ENCODE measurements at regions of chr6 and their contacts with region 1.

Region 1: GRCh38 chr6:44265007-44265721 is at the start of gene NFKBIE:
- DNase-seq: peak; percentile 94
- H3K4me3 Mint-ChIP-seq: peak within 1 kb of the TSS; percentile 85
- H3K27ac Mint-ChIP-seq: peak within 1 kb of the TSS; percentile 93
- H3K4me1 Mint-ChIP-seq: peaks cover 62% of the 10 kb centered on the region
- H3K27me3 Mint-ChIP-seq: peaks cover 33% of the 10 kb centered on the region

Region 2: DNA sequence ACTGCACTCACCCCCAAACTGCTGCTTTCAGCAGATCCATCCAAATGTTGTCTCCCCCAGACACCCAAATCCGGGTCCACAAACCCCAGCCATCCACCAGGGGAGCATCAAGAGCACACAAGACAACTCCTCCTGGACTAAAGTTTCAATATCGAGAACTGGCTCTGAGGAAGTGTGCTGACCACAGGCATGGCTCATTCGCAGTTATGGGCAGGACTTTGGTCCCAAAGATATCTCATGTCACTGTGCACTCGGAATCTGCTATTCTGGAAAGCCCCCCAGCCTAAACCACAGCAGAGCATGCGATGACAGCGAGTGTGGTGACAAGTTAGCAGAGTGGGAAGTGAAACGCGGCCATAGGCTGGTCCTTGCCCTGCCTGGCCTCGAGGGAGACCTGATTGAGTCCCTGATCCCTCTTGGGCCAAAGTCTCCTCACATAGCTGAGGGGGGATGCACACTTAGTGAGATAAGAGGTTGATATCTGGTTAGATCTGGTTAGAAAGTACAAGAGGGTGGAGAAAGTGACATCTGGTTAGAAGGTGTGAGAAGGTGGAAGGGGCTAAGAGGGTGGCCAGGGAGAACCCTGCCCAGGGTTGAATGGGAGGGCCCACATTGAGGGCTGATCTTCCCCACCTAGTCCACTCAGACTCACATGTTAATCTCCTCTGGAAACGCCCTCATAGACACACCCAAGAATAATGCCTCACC is 287.6 kb before region 1 on chr6:
- CTCF ChIA-PET with region 1: no interaction called
- DNase-seq: peak; percentile 16
- H3K4me3 Mint-ChIP-seq: no peak overlapping the region
- H3K27ac Mint-ChIP-seq: no peak overlapping the region
- H3K4me1 Mint-ChIP-seq: no peaks in the 10 kb centered on the region
- H3K27me3 Mint-ChIP-seq: peaks cover 52% of the 10 kb centered on the region

Region 3: GRCh38 chr6:44276667-44277640 is 11.8 kb after region 1 on chr6:
- CTCF ChIA-PET with region 1: interaction called, 10 read pairs
- DNase-seq: no peak
- H3K4me3 Mint-ChIP-seq: no peak overlapping the region
- H3K27ac Mint-ChIP-seq: no peak overlapping the region
- H3K4me1 Mint-ChIP-seq: peaks cover 5% of the 10 kb centered on the region
- H3K27me3 Mint-ChIP-seq: peaks cover 88% of the 10 kb centered on the region

Region 4: DNA sequence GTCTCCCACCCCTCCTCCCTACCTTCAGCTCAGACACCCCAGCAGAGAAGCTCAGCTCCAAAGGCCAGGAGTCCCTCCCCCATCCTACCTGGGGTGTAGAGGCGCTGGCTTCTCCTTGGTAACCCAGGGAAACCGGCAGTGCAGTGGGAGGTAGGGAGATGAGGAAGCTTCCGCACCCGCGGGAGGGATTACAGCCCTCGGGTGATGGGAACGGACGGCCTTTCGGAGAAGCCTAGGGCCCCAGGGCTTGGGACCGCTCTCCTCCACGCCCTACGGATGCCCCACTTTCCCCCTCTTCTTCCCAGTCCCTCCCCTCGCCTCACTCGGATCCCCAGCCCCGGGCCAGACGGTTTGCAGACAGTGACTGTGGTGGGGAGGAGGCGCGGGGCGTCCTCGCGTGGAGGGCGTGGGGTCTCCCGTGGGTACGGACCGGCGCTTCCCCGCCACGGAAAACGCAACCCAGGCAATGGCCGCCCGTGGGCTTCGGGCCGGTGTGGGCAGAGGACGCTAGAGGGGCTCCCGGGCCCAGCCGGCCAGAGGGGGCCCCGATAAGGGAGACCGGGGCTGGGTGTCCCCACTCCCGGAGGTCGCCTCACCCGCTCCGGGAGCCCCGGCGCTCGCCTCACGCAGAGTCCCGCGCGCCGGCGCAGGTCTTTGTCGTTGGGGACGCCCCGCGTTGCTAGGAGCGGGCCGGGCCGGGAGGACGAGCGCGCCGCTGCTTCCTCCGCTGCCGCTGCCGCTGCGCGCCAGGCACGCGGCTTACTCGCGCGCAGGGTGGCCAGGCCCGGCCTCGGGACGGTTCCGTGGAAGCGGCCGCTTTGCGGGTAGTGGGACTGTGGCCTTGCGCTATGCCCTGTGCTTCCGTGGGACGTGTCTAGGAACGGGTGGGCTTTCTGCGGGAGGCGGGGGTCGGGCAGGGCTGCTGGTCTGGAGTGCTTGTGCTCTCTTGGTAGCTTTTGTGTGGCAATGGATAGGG is 32.2 kb after region 1 on chr6:
- CTCF ChIA-PET with region 1: interaction called, 83 read pairs
- DNase-seq: peak; percentile 68
- H3K4me3 Mint-ChIP-seq: peak overlapping the region; percentile 18
- H3K27ac Mint-ChIP-seq: peak overlapping the region; percentile 12
- H3K4me1 Mint-ChIP-seq: peaks cover 6% of the 10 kb centered on the region
- H3K27me3 Mint-ChIP-seq: peaks cover 64% of the 10 kb centered on the region

Region 5: DNA sequence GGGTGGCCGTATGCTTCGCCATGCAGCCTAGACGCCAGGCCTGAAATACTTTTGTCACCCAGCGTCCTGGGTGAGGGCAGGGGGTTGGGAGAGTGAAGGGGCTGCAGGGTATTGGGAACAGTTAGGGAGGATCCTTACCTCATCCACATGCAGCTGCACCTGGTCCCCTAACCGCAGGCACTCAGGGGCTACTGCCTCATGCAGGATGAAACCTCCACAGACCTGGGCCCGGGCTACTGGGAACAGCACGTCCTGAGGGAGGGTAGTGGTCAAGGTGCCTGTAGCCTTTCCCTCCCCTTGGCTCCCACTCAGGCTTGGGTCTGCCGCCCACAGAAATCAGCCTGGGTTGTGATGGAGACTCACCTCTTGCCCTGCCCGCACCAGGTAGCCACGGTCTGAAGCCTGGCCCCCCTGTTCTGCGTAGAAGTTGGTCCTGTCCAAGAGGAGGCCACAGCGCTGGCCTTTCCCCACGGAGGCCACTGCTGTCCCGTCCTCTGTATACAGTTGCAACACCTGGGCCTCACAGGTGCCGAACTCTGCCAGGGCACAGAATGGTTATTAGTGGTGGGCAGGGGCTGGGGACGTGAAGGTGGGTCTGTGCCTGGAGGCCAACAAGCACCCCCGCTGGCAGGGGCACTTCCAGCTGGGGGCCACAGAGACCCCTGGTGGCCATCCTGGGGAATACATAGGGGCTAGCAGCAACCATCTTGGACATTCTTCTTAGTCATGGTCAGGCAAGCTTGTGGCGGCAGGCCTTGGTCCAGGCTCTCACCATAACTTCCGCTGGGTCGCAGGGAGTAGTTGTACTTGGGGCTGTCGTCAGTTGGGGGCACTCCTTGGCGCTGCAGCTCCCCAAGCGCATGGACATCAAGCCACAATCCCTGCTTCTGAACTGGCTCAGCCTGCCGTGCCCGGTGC is 39.4 kb after region 1 on chr6:
- CTCF ChIA-PET with region 1: interaction called, 83 read pairs
- DNase-seq: peak; percentile 51
- H3K4me3 Mint-ChIP-seq: no peak overlapping the region
- H3K27ac Mint-ChIP-seq: no peak overlapping the region
- H3K4me1 Mint-ChIP-seq: no peaks in the 10 kb centered on the region
- H3K27me3 Mint-ChIP-seq: no peaks in the 10 kb centered on the region

Region 6: GRCh38 chr6:44338228-44339122 is 73.3 kb after region 1 on chr6:
- CTCF ChIA-PET with region 1: interaction called, 105 read pairs
- DNase-seq: peak; percentile 77
- H3K4me3 Mint-ChIP-seq: no peak overlapping the region
- H3K27ac Mint-ChIP-seq: no peak overlapping the region
- H3K4me1 Mint-ChIP-seq: no peaks in the 10 kb centered on the region
- H3K27me3 Mint-ChIP-seq: peaks cover 36% of the 10 kb centered on the region

Region 7: GRCh38 chr6:44456070-44456965 is 191.2 kb after region 1 on chr6:
- CTCF ChIA-PET with region 1: interaction called, 11 read pairs
- DNase-seq: peak; percentile 47
- H3K4me3 Mint-ChIP-seq: no peak overlapping the region
- H3K27ac Mint-ChIP-seq: no peak overlapping the region
- H3K4me1 Mint-ChIP-seq: no peaks in the 10 kb centered on the region
- H3K27me3 Mint-ChIP-seq: peaks cover 31% of the 10 kb centered on the region

Measured in activated naive CD4-positive, alpha-beta T cell treated with anti-CD3 and anti-CD28 coated beads, Interleukin-2, amount 10 ng/mL, durations not matched to agents 7 days and 5 days (primary cell).